ENCODE measurements at regions of chr16 and their contacts with region 1.

Region 1: DNA sequence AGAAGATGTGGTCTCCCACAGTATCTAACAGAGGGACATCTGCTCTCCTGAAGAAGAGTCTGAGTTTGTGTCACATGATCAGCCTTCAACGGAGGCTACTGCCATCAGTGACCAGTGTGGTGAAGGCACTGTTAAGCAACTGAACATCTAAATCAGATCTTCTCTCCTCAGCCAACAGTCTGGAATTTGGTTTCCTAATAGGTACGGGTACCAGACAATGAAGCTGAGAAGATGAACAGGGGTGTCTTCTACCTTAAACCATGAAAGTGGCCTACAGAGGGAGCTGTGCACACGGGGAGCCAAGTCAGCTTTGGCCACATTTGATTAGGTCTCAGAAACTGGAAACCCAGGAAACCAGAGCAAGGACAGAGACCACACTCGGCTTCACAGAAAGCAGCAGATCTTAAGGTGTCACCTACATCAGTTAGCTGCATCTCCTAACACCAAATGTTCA is 41.8 kb downstream of the BRD7 start:
- DNase-seq: no peak
- ATAC-seq: peak; percentile 80
- H3K4me3 Mint-ChIP-seq: no peak overlapping the region
- H3K27ac Mint-ChIP-seq: peak overlapping the region; percentile 68
- H3K4me1 Mint-ChIP-seq: peaks cover 53% of the 10 kb centered on the region
- H3K27me3 Mint-ChIP-seq: no peaks in the 10 kb centered on the region
- CTCF ChIP-seq: no peak

Region 2: DNA sequence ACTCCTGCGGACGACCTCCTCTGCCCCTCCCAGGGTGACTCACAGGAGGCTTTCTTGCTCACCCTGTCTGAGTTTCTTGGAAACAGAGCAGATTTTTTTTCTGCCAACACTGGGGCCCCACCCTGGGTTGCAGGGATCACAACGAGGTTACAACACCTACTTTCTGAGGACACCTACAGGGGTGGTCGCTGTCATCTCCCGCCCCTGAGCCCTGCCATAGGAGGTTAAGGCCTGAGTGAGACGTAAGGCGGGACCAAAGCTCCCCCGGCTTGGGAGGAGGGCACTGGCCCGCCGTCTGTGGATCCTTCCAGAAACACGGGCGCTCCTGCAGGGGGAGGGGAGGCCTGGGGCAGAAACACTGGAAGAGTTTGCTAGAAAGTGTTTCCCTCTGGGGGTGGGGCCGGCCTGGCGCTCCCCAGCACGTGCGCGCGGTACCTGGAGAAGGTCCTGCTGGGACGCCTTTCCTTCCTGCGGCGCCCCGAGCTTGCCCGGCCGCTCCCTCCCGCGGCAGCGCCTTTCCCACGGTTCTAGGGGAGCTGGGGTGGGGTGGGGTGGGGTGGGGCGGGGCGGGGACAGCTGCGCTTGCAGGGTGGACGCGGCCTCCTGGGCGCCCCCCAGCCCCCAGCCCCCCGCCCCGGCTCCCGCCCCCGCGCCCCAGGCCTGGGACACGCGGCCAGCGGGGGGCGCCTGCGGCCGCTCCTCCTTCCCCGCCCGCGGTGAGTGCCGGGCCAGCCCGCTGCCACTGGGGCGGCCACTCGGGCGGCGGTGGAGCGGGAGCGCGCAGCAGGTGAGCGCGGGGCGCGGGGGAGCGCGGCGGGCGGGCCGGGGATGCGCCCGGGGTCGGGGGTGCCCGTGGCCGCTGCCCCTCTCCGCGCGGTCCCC is 81.3 kb before region 1 on chr16:
- CTCF ChIA-PET with region 1: interaction called, 6 read pairs
- POLR2A ChIA-PET with region 1: no interaction called
- intact Hi-C with region 1: loop called (anchors 2 kb)
- DNase-seq: peak; percentile 65
- ATAC-seq: peak; percentile 89
- H3K4me3 Mint-ChIP-seq: peak overlapping the region; percentile 77
- H3K27ac Mint-ChIP-seq: no peak overlapping the region
- H3K4me1 Mint-ChIP-seq: peaks cover 5% of the 10 kb centered on the region
- H3K27me3 Mint-ChIP-seq: peaks cover 3% of the 10 kb centered on the region
- CTCF ChIP-seq: no peak

Region 3: GRCh38 chr16:50273681-50274325 is 53.2 kb before region 1 on chr16:
- CTCF ChIA-PET with region 1: interaction called, 13 read pairs
- POLR2A ChIA-PET with region 1: interaction called, 6 read pairs
- intact Hi-C with region 1: no loop called
- DNase-seq: no peak
- ATAC-seq: peak; percentile 82
- H3K4me3 Mint-ChIP-seq: peak overlapping the region; percentile 99
- H3K27ac Mint-ChIP-seq: peak overlapping the region; percentile 100
- H3K4me1 Mint-ChIP-seq: peaks cover 92% of the 10 kb centered on the region
- H3K27me3 Mint-ChIP-seq: no peaks in the 10 kb centered on the region
- CTCF ChIP-seq: no peak

Region 4: GRCh38 chr16:50313596-50314478 is 13.1 kb before region 1 on chr16:
- CTCF ChIA-PET with region 1: interaction called, 12 read pairs
- POLR2A ChIA-PET with region 1: no interaction called
- intact Hi-C with region 1: loop called (anchors 2 kb)
- DNase-seq: peak; percentile 14
- ATAC-seq: peak; percentile 49
- H3K4me3 Mint-ChIP-seq: no peak overlapping the region
- H3K27ac Mint-ChIP-seq: peak overlapping the region; percentile 57
- H3K4me1 Mint-ChIP-seq: peaks cover 9% of the 10 kb centered on the region
- H3K27me3 Mint-ChIP-seq: no peaks in the 10 kb centered on the region
- CTCF ChIP-seq: no peak

Region 5: GRCh38 chr16:50368410-50369132 is 41.6 kb after region 1 on chr16 and contains the start of gene BRD7:
- CTCF ChIA-PET with region 1: interaction called, 3 read pairs
- POLR2A ChIA-PET with region 1: no interaction called
- intact Hi-C with region 1: loop called (anchors 5 kb)
- DNase-seq: peak; percentile 79
- ATAC-seq: peak; percentile 89
- H3K4me3 Mint-ChIP-seq: peak within 1 kb of the TSS; percentile 92
- H3K27ac Mint-ChIP-seq: peak within 1 kb of the TSS; percentile 90
- H3K4me1 Mint-ChIP-seq: peaks cover 47% of the 10 kb centered on the region
- H3K27me3 Mint-ChIP-seq: peaks cover 4% of the 10 kb centered on the region
- CTCF ChIP-seq: no peak
- total RNA-seq, gene BRD7: 60.3 and 65.2 TPM in 2 replicates

Region 6: DNA sequence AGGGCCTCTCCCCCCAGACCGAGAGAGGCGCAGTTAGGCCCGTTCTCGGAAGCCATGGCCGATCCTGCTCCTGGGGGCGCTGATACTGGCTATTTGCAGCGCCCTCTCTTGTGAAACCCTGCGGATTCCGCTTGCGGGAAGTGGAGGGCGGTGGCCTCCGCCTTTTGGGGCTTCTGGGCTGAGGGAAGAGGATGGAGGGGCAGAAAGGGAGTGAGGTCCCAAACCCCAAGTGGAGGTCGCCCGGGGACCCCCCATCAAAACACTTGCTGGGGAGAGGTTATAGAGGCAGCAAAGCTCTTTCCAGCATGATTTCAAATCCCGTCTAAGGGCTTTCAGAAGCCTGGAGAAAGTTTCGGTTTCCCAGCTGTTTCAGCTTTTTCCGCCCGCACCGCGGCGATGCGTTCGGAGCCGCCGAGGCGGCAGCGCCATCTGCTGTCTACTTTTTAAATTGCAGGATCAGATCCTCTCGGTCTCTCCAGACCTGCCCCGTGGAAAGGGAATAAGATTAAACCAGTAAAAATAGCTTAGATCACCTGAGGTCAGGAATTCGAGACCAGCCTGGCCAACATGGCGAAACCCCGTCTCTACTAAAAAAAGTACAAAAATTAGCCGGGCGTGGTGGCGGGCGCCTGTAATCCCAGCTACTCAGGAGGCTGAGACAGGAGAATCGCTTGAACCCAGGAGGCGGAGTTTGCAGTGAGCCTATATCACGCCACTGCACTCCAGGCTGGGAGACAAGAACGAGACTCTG is 338.3 kb after region 1 on chr16:
- CTCF ChIA-PET with region 1: interaction called, 35 read pairs
- POLR2A ChIA-PET with region 1: no interaction called
- intact Hi-C with region 1: loop called (anchors 1 kb)
- DNase-seq: peak; percentile 68
- ATAC-seq: peak; percentile 70
- H3K4me3 Mint-ChIP-seq: peak overlapping the region; percentile 81
- H3K27ac Mint-ChIP-seq: peak overlapping the region; percentile 65
- H3K4me1 Mint-ChIP-seq: peaks cover 23% of the 10 kb centered on the region
- H3K27me3 Mint-ChIP-seq: no peaks in the 10 kb centered on the region
- CTCF ChIP-seq: no peak

Region 7: GRCh38 chr16:50806099-50807062 is 479.4 kb after region 1 on chr16:
- CTCF ChIA-PET with region 1: interaction called, 10 read pairs
- POLR2A ChIA-PET with region 1: no interaction called
- intact Hi-C with region 1: no loop called
- DNase-seq: peak; percentile 64
- ATAC-seq: peak; percentile 95
- H3K4me3 Mint-ChIP-seq: peak overlapping the region; percentile 77
- H3K27ac Mint-ChIP-seq: peak overlapping the region; percentile 73
- H3K4me1 Mint-ChIP-seq: peaks cover 17% of the 10 kb centered on the region
- H3K27me3 Mint-ChIP-seq: peaks cover 10% of the 10 kb centered on the region
- CTCF ChIP-seq: peak; percentile 80